AG04449 (cell line): ENCODE measurements at regions of chr1 and their contacts with region 1.

Region 1: DNA sequence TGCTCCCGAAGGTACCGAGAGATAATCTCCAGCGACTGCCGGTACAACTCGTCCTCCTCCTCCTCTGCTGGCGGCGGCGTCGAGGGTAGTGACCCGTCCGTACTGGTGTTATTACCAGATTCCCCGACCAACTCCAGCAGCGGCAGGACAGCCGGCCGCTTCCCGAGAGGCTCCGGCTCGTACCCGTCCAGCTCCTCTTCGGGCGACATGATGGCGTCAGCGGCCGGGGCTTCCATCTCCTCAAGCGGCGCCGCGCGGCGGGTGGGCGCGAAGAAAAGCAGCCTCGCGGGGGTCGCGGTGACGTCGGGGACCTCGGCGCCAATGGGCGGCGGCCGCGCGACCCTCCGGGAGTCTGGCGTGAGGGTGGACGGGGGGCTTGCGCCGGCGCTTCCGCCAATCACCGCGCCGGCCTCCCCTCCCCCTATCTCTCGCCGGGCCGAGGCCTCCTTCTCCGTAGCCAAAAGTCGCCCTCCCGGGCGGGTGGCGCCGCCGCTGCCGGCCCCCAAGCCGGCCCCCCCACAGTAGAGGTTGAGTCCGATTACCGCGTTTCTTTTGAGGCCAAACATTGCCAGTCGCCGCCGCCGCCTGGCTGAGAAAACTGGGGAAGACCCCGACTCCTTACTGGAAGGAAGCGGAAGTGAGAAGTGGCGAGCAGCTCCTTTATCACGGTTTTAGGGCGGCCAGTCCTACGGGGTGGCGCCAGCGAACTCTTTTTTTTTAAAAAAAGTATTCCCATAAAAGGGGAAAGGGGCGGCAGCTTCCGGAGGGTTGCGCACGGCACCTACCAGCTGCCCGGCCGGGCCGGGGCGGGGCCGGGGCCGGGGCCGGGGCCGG is at the start of gene MCL1:
- DNase-seq: peak; percentile 84
- H3K4me3 ChIP-seq: peak within 1 kb of the TSS; percentile 100
- CTCF ChIP-seq: no peak

Region 2: DNA sequence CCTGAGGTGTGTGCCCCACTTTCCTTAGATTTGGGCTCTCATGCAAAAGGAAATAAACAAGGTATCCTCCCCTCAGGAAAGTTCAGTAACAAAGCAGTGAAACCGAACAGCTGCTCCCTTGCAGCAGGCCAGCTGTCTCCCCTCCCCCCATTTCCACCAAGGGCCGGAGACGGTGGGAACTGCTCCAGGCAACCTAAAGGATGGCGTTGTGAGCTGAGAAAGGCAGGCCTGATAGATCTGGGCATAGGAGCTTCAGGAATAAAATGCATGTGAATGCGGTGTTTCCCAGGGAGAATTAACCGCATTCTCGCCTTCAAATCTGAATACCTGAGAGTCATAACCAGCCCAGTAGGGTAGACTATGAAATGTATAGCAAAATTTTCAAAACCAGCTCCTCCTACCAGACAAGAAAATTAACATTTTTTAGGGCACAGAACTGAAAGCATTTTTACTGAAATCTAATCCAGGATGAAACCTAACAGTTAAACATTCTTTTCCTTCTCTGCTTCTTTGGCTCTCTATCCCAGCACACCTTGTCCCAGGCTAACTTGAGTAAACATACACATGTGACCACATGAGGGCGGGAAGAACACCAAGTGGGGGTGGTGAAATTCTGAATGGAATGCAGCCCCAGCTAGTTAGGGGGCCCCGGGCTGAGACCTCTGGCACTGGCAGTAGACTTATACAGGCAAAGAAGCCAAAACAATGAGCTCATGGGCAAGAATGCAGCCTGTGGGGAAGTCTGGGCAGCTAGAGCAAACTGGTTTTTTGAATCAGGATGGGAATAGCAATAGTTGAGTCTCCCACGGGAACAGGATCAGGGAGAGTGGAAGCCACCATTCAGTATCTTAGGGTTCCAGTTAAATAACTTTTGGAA is 11.2 kb before region 1 on chr1:
- CTCF ChIA-PET with region 1: interaction called, 9 read pairs
- POLR2A ChIA-PET with region 1: interaction called, 135 read pairs
- DNase-seq: peak; percentile 95
- H3K4me3 ChIP-seq: peak overlapping the region; percentile 36
- CTCF ChIP-seq: no peak

Region 3: DNA sequence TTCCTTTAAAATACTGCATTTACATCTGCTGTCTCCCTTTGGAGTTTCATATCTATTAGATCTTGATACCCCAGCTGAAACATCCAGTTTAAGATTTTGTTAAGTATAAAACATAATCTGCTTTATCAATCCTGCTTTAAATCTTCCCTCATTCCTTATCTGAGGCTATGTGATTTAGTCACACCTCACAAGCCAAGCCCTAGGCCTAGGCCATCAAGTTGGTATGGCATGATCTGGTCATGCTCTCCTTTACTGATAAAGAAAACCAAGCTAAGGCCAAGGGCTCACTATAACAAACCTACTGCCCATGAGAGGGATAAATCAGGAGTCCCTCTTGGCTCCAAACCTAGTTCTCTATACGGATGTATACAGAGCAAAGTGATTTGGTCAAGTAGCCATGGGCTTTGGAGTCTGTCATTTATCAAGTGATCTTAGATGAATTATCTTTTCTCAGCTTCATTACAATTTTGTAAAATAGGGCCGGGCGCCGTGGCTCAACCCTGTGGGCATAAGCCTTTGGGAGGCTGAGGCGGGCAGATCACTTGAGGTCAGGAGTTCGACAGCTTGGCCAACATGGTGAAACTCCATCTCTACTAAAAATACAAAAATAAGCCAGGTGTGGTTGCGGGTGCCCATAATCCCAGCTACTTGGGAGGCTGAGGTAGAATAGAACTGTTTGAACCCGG is 27.4 kb after region 1 on chr1:
- CTCF ChIA-PET with region 1: interaction called, 3 read pairs
- POLR2A ChIA-PET with region 1: interaction called, 31 read pairs
- DNase-seq: no peak
- H3K4me3 ChIP-seq: no peak overlapping the region
- CTCF ChIP-seq: no peak

Region 4: DNA sequence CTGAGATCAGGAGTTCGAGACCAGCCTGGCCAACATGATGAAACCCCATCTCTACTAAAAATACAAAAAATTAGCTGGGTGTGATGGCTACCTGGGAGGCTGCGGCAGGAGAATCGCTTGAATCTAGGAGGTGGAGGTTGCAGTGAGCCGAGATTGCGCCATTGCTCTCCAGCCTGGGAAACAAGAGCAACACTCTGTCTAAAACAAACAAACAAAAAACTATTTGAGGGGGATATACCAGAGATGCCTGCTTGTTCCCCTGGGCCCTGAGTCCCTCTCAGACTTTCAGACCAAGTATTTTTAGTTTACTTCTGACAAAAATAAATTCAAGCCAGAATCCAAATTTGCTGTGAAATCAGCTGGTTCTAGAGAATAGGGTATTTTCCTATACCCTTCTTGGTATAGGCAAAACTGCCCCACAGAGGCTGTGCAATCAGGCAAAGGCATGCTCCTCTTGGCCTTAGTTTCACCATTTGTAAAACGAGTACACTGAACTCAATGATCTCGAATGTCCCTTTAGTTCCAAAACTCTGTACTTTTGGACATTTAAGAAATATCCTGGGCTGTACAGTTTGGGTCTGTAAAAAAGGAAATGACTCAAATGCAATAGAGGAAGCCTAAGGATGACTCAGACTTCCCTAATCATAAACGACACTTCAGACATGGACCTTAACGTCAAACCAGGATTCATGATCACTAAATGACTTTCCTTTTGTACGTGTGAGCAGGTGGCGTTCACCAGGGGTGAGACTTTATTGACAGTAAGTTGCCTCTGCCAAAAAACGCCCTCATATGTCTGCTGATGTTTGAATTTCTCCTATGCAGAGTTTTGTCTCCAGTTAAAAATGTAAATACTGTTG is 34.1 kb after region 1 on chr1:
- CTCF ChIA-PET with region 1: interaction called, 3 read pairs
- POLR2A ChIA-PET with region 1: interaction called, 13 read pairs
- DNase-seq: no peak
- H3K4me3 ChIP-seq: peak overlapping the region; percentile 21; the same call in 1 of the 2 replicates
- CTCF ChIP-seq: no peak

Region 5: GRCh38 chr1:150621497-150622302 is 42.5 kb after region 1 on chr1:
- CTCF ChIA-PET with region 1: interaction called, 17 read pairs
- POLR2A ChIA-PET with region 1: interaction called, 17 read pairs
- DNase-seq: no peak
- H3K4me3 ChIP-seq: no peak overlapping the region
- CTCF ChIP-seq: peak; percentile 63

Region 6: DNA sequence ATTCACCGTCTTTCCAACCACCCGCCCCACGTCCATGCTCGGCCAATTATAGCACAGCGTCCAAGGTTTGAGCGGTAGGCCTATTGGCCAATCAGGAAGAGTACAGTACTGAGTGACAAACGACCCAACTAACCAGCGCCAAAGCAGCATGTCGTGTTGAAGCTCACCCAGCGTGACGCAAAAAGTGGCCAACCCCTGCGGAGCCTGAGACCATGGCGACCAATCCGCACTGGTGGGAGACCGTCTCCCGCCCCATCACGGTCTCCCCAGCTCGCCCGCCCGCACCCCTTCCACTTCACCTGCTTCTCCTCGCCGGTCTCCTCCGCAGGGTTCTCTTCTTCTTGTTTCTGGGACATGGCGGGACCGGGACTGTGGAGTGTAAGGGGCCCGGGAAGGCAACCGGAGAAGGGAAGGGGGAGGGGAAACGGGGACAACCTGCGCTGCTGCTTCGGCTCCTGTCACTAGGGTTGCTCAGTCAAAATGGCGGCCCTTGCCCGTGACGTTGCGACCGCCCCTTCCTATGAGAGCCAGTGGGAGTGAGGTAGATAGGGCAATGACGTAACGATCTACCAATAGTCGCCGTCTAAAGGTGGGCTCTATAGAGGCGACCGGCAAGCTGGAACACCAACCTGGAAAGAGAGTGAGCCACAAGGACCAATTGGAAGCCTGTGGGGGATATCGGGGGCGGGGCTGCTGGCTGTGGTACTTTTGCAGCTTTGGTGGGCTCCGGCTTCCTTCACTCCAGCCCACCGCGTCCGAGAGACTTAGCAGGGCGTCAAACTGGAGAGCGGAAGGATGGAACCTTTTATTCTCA is 50.1 kb after region 1 on chr1 and contains the start of gene ENSA:
- CTCF ChIA-PET with region 1: no interaction called
- POLR2A ChIA-PET with region 1: interaction called, 24 read pairs
- DNase-seq: peak; percentile 99
- H3K4me3 ChIP-seq: peak within 1 kb of the TSS; percentile 75
- CTCF ChIP-seq: no peak

Region 7: GRCh38 chr1:150683914-150684313 is 104.7 kb after region 1 on chr1:
- CTCF ChIA-PET with region 1: no interaction called
- POLR2A ChIA-PET with region 1: no interaction called
- DNase-seq: no peak
- H3K4me3 ChIP-seq: no peak overlapping the region
- CTCF ChIP-seq: no peak